CD8-positive, alpha-beta memory T cell (primary cell): ENCODE measurements at regions of chr10 and their contacts with region 1.

Region 1: DNA sequence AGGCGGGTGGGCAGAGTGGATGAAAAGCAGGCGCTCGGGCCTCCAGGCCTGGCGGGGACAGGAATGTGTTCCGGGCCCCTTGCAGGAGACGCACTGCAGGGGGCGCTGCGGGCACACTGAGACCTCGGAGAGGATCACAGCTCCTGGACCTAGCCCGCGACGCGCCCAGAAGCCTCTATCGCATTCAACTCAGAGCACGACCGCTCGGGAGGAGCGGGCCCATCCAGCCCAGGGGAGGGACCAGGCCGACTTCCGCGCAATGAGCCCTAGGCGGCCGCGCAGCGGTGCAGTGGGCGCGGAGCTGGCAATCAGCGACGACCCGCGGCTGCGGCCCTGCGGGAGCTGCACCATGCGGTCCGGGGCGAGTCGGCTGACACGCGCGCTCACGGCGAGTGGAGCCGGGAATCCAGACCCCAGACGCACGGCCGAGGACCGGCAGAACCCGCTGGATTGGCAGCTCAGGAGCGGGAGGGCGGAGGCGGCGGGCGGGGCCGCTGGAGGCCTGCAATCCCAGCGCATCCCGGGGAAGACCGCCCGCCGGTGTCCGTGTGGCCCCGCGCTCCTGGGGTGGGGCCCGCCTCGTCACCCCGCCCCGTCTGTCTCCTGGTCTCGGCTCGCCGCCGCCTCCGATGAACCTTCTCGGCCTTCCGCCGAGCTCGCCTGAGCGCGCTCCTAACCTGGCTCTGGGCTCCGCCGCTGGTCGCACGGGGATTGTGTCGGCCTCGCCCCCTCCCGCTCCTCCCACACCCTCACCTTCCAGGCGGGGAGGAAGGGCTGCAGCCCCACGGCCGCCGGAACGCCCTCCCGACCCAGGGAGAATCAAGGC is 33.5 kb upstream of the GRID1 start:
- DNase-seq: peak; percentile 86 to 95 (median 87)
- H3K4me3 ChIP-seq: peak overlapping the region; percentile 84
- H3K4me3 Mint-ChIP-seq: peak overlapping the region; percentile 86 to 97 (median 91)
- H3K27ac ChIP-seq: peak overlapping the region; percentile 38
- H3K27ac Mint-ChIP-seq: peak overlapping the region; percentile 77 to 95 (median 88)
- H3K4me1 ChIP-seq: peaks cover 14% of the 10 kb centered on the region
- H3K4me1 Mint-ChIP-seq: peaks cover 12 to 15% (median 15%) of the 10 kb centered on the region in 3 donors
- H3K27me3 ChIP-seq: no peaks in the 10 kb centered on the region
- H3K27me3 Mint-ChIP-seq: peaks cover 0 to 3% of the 10 kb centered on the region in 2 donors

Region 2: GRCh38 chr10:86411281-86411841 is 11.3 kb after region 1 on chr10:
- CTCF ChIA-PET with region 1: interaction called, 55 read pairs
- POLR2A ChIA-PET with region 1: interaction called, 50 read pairs
- DNase-seq: peak in 2 of 5 donors; percentile 27 to 52
- H3K4me3 ChIP-seq: peak overlapping the region; percentile 2
- H3K4me3 Mint-ChIP-seq: peak overlapping the region; percentile 15 to 85 (median 81)
- H3K27ac ChIP-seq: no peak overlapping the region
- H3K27ac Mint-ChIP-seq: peak overlapping the region; percentile 75 to 96 (median 88)
- H3K4me1 ChIP-seq: peaks cover 42% of the 10 kb centered on the region
- H3K4me1 Mint-ChIP-seq: peaks cover 40 to 41% (median 40%) of the 10 kb centered on the region in 3 donors
- H3K27me3 ChIP-seq: no peaks in the 10 kb centered on the region
- H3K27me3 Mint-ChIP-seq: no peaks in the 10 kb centered on the region

Region 3: DNA sequence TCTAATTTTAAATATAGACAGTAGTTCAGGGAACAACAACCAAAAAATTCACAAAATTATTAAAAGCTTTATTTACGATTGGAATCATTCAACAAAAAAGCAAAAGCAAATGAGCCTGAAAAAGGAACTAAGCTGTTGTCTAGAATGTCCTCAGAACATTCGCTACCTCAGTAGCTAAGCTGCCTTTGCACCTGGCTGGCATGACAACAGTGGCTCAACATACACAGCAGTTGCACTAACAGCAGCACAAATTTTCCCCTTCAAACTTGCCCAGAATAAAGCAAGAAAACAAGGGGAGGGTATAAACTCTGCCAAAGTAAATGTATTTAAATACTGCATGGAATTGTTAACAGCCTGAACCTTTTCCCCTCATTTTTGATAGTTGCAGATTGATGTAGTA is 36.9 kb after region 1 on chr10:
- CTCF ChIA-PET with region 1: interaction called, 13 read pairs
- POLR2A ChIA-PET with region 1: interaction called, 6 read pairs
- DNase-seq: no peak
- H3K4me3 ChIP-seq: no peak overlapping the region
- H3K4me3 Mint-ChIP-seq: no peak overlapping the region
- H3K27ac ChIP-seq: no peak overlapping the region
- H3K27ac Mint-ChIP-seq: peak overlapping the region in 1 of 8 donors; percentile 54
- H3K4me1 ChIP-seq: no peaks in the 10 kb centered on the region
- H3K4me1 Mint-ChIP-seq: peaks cover 15 to 22% (median 18%) of the 10 kb centered on the region in 3 donors
- H3K27me3 ChIP-seq: no peaks in the 10 kb centered on the region
- H3K27me3 Mint-ChIP-seq: no peaks in the 10 kb centered on the region

Region 4: DNA sequence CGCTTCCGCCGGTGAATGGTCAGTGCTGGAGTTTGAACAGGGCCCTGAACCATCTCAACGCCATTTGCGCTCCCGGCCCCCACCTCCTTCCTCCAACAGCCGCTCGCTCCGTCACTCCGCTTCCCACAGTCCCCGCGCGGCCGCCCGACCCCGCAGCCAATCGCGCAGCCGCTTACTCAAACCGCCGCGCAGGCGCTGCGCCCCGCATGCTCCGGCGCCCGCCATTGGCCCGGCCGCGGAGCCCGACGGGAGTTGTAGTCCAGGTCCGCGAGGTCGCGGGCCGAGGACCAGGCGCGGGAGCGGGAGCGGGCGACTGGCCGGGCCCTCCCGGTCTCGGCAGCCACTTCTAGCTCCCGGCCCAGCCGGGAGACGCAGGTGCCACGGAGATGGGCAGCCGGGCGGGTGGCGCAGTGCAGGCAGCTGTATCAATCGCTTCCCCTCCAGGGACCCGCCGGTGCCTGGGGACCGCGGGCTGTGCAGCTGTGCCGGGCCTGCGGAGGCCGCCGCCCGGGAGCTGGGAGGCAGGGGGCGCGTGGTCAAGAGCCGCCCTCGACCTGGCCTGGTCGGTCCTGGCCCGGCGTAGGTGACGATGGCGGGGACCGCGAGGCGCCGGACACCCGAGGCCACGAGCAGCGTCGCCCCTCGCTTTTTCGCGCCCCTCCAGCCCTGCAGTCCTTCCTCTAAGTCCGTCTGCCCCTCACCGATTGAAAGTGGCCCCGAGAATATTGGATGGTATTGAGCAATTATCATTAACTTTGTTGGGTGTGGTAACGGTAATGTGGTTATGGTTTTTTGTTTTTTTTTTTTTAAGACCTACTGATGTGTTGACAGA is 121.8 kb after region 1 on chr10 and contains the start of gene WAPL:
- CTCF ChIA-PET with region 1: interaction called, 10 read pairs
- POLR2A ChIA-PET with region 1: interaction called, 4 read pairs
- DNase-seq: peak; percentile 91 to 95 (median 94)
- H3K4me3 ChIP-seq: peak within 1 kb of the TSS; percentile 85
- H3K4me3 Mint-ChIP-seq: peak within 1 kb of the TSS; percentile 93 to 97 (median 95)
- H3K27ac ChIP-seq: peak within 1 kb of the TSS; percentile 89
- H3K27ac Mint-ChIP-seq: peak within 1 kb of the TSS; percentile 89 to 98 (median 96)
- H3K4me1 ChIP-seq: peaks cover 48% of the 10 kb centered on the region
- H3K4me1 Mint-ChIP-seq: peaks cover 54 to 74% (median 73%) of the 10 kb centered on the region in 3 donors
- H3K27me3 ChIP-seq: no peaks in the 10 kb centered on the region
- H3K27me3 Mint-ChIP-seq: no peaks in the 10 kb centered on the region
- total RNA-seq, gene WAPL: 49.7 to 54.2 TPM